Activated CD8-positive, alpha-beta memory T cell treated with anti-CD3 and anti-CD28 coated beads, Interleukin-2, amount 10 ng/mL, durations not matched to agents 7 days and 5 days (primary cell): ENCODE measurements at regions of chr10 and their contacts with region 1.

Region 1: DNA sequence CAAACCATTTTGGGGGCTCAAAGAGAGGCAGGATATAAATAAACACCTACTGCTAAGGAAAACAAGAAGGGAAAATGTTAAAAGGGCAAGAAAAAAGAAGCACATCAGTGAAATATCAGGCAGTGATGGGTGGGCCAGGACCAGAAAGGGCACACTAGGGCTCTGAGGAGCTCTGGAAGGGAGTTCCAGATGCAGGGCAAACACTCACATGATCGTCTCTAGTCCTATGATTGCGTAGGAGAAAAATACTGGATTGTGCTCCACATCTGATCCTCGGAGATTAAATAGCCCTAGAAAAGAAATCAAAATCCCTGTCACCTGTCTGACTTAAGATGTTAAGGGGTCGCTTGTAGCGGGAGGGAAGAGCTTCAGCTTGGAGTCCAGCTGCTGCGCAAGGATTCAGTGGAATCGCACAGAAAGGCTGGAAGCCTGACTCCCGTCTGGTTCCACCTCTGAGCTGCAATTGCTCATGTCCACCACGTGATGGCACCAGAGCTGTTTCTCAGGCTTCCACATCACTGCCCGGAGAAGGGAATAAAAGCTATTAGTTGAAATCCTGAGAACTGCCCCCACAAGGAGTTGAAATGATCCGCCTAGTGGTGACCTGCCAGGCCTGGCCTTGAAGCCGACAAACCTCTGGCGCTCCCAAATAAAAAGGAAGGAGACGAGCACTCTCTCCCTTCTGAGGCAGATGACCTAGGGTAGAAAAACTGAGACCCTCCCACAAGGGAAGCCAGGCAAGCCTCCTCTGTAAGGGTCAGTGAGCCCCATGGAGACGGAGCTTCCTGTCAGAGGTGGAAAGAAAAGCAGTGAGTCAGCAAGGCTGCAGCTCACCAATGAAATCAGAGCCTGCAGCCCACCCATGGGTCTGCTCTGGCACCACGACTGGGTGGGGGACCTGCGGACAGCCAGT is 39.2 kb downstream of the XPNPEP1 start:
- DNase-seq: peak; percentile 70
- ATAC-seq: peak; percentile 66
- H3K4me3 Mint-ChIP-seq: no peak overlapping the region
- H3K27ac Mint-ChIP-seq: no peak overlapping the region
- H3K4me1 Mint-ChIP-seq: peaks cover 28% of the 10 kb centered on the region
- H3K27me3 Mint-ChIP-seq: no peaks in the 10 kb centered on the region

Region 2: DNA sequence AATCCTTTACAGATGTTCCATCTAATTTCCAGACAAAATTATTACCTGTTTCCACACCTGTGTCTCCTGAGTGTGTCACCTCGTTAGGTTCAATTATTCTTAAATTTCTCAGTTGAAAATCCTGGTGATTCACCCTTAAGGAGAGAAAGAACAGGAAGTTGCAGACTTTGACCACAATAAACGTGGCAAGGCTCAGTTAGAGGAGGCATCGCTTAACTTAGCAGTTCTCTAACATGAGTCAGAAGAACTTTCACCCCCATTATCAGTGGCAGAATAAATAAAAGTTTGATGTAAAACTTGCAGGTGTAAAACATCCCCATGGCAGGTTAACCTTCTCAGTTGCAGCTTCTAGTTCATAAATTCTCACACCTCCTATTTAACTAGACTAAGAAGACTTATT is 30.9 kb after region 1 on chr10:
- CTCF ChIA-PET with region 1: interaction called, 13 read pairs
- DNase-seq: peak; percentile 67
- ATAC-seq: peak; percentile 76
- H3K4me3 Mint-ChIP-seq: peak overlapping the region; percentile 35
- H3K27ac Mint-ChIP-seq: peak overlapping the region; percentile 76
- H3K4me1 Mint-ChIP-seq: peaks cover 82% of the 10 kb centered on the region
- H3K27me3 Mint-ChIP-seq: no peaks in the 10 kb centered on the region

Region 3: DNA sequence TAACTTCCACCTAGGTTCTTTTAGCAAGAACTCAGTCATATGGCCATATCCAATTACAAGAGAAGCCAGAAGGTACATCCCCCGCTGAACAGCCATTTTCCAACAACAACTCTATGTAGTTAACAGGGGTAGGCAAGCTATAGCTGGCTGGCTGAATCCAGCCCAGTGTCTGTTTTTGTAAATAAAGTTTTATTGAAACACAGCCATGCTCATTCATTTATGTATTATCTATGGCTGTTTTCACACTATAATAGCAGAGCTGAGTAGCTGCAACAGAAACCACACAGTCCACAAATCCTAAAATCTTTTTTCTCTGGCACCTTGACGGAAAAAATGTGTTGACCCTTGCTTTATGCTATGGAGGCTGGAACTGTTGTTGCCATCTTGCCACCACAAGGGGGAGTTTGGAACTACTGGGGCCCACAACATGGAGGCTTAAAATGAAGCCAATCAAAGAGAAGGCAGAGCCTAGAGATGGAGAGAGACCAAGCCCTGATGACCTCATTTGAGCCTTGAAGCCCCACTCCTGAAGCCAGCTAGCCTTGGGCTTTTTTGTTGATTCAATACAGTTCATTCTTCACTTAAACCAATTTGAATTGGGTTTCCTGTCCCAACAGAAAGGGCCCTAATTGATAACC is 72.5 kb after region 1 on chr10:
- CTCF ChIA-PET with region 1: interaction called, 11 read pairs
- DNase-seq: no peak
- ATAC-seq: peak; percentile 80
- H3K4me3 Mint-ChIP-seq: no peak overlapping the region
- H3K27ac Mint-ChIP-seq: no peak overlapping the region
- H3K4me1 Mint-ChIP-seq: peaks cover 2% of the 10 kb centered on the region
- H3K27me3 Mint-ChIP-seq: peaks cover 8% of the 10 kb centered on the region

Region 4: GRCh38 chr10:109992485-109992884 is 108.4 kb after region 1 on chr10:
- CTCF ChIA-PET with region 1: interaction called, 11 read pairs
- DNase-seq: no peak
- ATAC-seq: no peak
- H3K4me3 Mint-ChIP-seq: no peak overlapping the region
- H3K27ac Mint-ChIP-seq: no peak overlapping the region
- H3K4me1 Mint-ChIP-seq: peaks cover 2% of the 10 kb centered on the region
- H3K27me3 Mint-ChIP-seq: peaks cover 8% of the 10 kb centered on the region

Region 5: GRCh38 chr10:110007701-110008517 is 123.8 kb after region 1 on chr10 and contains the start of gene ADD3:
- CTCF ChIA-PET with region 1: interaction called, 13 read pairs
- DNase-seq: peak; percentile 95
- ATAC-seq: peak; percentile 78
- H3K4me3 Mint-ChIP-seq: no peak within 1 kb of the TSS
- H3K27ac Mint-ChIP-seq: peak within 1 kb of the TSS; percentile 89
- H3K4me1 Mint-ChIP-seq: peaks cover 34% of the 10 kb centered on the region
- H3K27me3 Mint-ChIP-seq: no peaks in the 10 kb centered on the region
- total RNA-seq, gene ADD3: 124 to 206 TPM